HEK293T (cell line): ENCODE measurements at regions of chr1 and their contacts with region 1.

Region 1: DNA sequence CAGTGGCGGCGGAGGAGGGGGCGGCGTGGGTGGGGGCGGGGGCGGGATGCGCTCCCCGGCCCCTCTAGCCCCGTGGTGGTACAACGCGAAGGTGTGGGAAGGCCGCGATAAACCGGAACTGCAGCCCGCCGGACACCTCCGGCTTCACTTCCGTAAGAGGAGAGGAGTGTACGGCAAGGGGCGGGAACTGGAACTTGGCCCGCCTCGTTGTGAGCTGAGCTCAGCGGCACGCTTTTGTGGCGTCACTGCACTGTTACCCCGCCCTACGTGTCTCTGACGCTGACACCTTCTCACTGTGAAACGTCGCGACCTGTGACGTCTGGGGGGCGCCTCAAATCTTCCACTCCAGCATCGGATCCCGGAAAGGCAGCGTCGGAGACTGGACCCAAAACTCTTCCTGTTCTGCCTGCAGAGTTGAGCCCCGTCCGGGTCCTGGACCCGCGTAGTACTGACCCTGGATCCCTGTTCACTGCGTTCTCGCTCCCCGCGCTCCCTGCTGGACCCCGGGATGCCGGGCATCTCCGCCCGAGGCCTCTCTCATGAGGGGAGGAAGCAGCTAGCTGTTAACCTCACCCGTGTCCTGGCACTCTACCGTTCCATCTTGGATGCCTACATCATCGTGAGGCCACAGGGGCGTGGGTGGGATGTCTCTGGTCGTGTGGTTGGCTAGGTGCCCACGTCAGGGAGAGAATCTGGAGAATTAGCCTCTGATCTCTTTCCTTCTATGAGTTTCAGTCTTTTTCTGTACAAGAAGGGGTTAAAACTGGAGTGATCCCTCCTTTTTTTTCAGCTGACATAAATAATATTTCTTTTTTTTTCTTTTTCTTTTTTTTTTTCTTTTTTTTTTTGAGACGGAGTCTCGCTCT is at the start of gene ISG20L2:
- DNase-seq: peak; percentile 94

Region 2: DNA sequence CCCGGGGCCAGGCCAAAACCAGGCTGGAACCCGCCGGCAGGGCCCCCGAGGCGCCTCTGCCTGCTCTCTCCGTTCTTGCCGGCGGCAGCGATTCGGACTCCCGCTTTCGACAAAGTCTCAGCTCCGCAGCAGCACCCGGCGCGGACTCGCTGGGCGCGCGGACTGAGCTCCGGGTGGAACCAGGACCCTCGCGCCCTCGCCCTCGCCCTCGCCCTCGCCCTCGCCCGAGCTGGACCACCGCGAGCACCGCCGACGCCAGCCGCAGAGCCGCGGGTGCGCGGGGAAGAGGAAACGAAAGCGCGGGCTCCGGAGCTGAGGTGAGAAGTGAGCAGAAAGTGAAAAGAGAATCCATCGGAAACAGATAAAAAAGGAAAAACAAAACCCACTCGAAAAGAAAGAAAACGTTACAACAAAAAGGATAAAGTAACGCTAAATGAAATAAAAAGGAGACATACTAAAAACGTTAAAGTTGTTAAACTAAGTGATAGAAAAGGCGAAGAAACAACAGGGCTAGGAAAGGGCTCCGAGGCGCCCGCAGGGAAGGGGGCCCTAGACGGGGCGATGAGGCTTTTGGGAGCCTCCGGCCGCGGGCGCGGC is 293.2 kb before region 1 on chr1:
- CTCF ChIA-PET with region 1: no interaction called
- POLR2A ChIA-PET with region 1: no interaction called
- DNase-seq: no peak

Region 3: GRCh38 chr1:156659994-156660751 is 68.7 kb before region 1 on chr1:
- CTCF ChIA-PET with region 1: interaction called, 14 read pairs
- POLR2A ChIA-PET with region 1: interaction called, 23 read pairs
- DNase-seq: peak; percentile 100

Region 4: GRCh38 chr1:156700736-156701531 is 27.9 kb before region 1 on chr1:
- CTCF ChIA-PET with region 1: interaction called, 67 read pairs
- POLR2A ChIA-PET with region 1: interaction called, 72 read pairs
- DNase-seq: no peak

Region 5: GRCh38 chr1:156740679-156741612 is 12.1 kb after region 1 on chr1 and contains the start of gene MRPL24:
- CTCF ChIA-PET with region 1: interaction called, 7 read pairs
- POLR2A ChIA-PET with region 1: interaction called, 103 read pairs
- DNase-seq: peak; percentile 98

Region 6: GRCh38 chr1:156767101-156767878 is 38.5 kb after region 1 on chr1 and contains the start of gene PRCC:
- CTCF ChIA-PET with region 1: interaction called, 22 read pairs
- POLR2A ChIA-PET with region 1: interaction called, 92 read pairs
- DNase-seq: peak; percentile 95

Region 7: DNA sequence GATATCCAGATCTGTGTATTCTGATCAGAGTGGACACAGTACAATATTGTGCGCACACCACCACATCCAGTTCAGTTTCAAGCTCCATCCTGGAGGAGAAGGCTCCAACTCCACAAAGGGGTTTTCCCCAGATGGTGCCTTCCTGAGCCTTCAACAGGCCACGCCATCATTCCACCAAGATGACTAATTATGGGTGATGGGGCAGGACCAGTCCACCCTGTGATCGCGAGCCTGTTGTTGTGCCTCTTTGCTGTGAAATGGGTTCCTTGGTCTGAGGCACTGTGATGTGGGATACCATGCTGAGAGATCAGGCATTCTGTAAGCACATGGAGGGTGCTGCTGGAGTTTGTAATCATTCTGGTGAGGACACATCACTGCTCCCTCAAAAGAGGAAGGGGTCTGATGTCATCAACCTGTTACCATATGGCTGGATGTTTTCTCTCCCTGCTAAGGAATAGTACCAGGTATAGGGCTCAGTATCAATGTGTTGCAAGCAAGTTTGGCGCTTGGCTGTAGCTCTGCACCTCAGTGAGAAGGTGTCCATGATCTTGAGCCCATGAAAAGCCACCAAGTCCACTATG is 94.5 kb after region 1 on chr1:
- CTCF ChIA-PET with region 1: no interaction called
- POLR2A ChIA-PET with region 1: no interaction called
- DNase-seq: no peak

Region 8: DNA sequence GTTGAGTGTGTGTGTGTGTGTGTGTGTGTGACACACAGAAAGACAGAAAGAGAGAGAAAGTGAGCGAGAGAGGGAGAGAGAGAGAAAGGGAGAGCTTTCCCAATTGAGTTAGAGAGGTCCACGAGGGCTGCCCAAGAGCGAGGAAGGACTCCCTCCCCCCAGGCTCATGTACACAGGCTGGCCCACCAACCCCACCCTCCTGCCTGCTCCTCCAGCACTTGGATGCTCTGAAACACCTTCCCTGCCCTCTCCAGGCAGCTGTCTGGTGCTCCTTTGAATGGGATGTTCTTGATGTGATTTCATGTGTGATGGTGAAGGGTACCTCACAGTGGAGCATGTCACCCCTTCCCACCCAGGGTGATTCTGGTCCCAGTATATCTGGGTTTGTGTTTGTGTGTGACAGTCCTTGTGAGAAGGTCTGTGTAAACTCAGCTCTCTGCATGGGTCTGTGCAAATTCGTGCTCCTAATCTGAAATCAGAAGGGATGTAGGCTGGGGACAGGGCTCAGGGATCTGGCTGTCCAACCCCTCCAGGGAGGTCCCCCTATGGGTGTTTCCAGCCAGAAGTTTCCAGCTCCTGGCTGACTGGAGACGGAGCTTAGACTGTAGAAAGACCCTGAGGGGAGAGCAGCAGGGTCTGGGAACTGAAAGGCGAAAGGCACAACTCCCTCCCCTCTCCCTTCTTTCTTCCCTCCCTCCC is 157.9 kb after region 1 on chr1:
- CTCF ChIA-PET with region 1: interaction called, 33 read pairs
- POLR2A ChIA-PET with region 1: interaction called, 9 read pairs
- DNase-seq: no peak

Region 9: DNA sequence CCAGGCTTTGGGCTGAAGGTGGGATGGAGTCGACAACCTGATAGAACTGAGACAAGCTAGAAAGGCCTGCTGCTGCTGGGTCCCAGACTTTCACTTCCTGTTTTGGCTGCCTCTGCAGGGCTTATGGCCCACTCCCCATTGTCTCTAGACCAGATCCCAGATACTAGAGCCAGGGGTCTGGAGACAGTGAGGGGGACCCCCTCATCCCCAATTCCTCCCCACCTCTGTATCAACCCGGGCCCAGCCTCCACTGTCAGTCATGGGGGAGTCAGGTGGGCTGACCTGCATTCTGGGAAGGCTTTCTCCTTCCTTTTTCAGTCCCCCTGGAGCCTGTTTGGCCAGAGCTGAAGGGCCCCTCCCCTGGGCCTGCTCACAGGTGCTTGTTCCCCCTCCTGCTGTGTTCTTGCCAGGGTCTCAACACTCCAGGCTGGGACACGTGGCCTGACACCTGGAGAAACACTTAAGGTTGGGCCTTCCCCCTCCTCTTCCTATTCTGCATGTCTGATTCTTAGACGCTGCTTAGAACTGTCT is 388.8 kb after region 1 on chr1:
- CTCF ChIA-PET with region 1: no interaction called
- POLR2A ChIA-PET with region 1: no interaction called
- DNase-seq: no peak